ENCODE measurements at regions of chr5 and their contacts with region 1.

Region 1: GRCh38 chr5:177113566-177114424 is 19.8 kb upstream of the NSD1 start:
- DNase-seq: peak; percentile 56 to 88 (median 78)
- ATAC-seq: peak; percentile 54 to 83 (median 77)
- H3K4me3 ChIP-seq: no peak overlapping the region
- H3K27ac ChIP-seq: no peak overlapping the region
- H3K4me1 ChIP-seq: peaks cover 0 to 3% (median 0%) of the 10 kb centered on the region in 3 donors
- H3K27me3 ChIP-seq: no peaks in the 10 kb centered on the region
- CTCF ChIP-seq: peak; percentile 91 to 99 (median 96)

Region 2: DNA sequence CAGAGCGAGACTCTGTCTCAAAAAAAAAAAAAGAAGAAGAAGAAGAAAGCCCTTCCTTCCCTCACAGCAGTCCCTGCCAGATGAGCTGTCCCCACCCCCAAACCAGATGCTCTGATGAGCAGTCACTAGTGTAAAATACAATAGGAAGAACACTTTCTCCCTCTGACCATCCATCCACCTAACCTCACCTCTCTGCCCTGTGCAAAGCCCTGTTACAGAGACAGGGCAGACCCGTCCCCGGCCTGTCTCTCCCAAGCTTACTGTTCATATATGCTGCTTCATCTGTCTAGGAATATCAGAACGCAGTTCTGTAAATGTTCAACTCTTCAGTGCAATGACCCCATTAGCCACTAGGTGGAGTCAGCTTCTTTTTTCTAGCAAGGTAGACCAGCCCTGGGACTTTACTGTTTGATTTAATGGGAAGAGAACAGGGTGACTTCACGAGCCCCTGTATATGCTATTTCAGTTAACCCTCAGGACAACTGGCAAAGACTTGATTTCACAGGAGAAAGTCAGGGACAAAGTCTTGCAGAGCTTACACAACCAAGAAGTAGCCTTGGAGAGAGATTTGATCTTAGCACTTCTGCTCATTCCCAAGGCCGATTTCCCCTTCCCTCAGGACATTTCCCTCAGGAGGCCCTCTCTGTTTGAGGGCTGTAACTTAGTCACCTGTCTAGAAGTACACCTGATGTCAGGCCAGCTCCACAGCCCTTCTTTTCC is 42.0 kb before region 1 on chr5:
- intact Hi-C with region 1: loop called in 2 of 3 experiments (anchors 5 kb)
- DNase-seq: peak in 3 of 6 donors; percentile 59 to 79 (median 68)
- ATAC-seq: peak; percentile 78 to 96 (median 91)
- H3K4me3 ChIP-seq: no peak overlapping the region
- H3K27ac ChIP-seq: no peak overlapping the region
- H3K4me1 ChIP-seq: no peaks in the 10 kb centered on the region
- H3K27me3 ChIP-seq: no peaks in the 10 kb centered on the region
- CTCF ChIP-seq: peak; percentile 67 to 93 (median 82)

Region 3: GRCh38 chr5:177198738-177199137 is 84.9 kb after region 1 on chr5:
- intact Hi-C with region 1: no loop called
- DNase-seq: no peak
- ATAC-seq: no peak
- H3K4me3 ChIP-seq: no peak overlapping the region
- H3K27ac ChIP-seq: no peak overlapping the region
- H3K4me1 ChIP-seq: no peaks in the 10 kb centered on the region
- H3K27me3 ChIP-seq: peaks cover 0 to 5% (median 0%) of the 10 kb centered on the region in 4 donors
- CTCF ChIP-seq: no peak

Region 4: GRCh38 chr5:177303121-177303924 is 189.5 kb after region 1 on chr5 and contains the starts of genes PRELID1 and RAB24:
- intact Hi-C with region 1: loop called in 1 of 3 experiments (anchors 10 kb)
- DNase-seq: peak; percentile 85 to 97 (median 89)
- ATAC-seq: peak; percentile 68 to 80 (median 74)
- H3K4me3 ChIP-seq: peak within 1 kb of the TSS; percentile 69 to 91 (median 79)
- H3K27ac ChIP-seq: peak within 1 kb of the TSS; percentile 85 to 89 (median 86)
- H3K4me1 ChIP-seq: peaks cover 30 to 46% (median 34%) of the 10 kb centered on the region in 3 donors
- H3K27me3 ChIP-seq: no peaks in the 10 kb centered on the region
- CTCF ChIP-seq: no peak
- total RNA-seq, gene PRELID1: 77.8 to 153 (median 127) TPM
- total RNA-seq, gene RAB24: 34.5 to 43.1 (median 37.7) TPM